ENCODE measurements at regions of chr20 and their contacts with region 1.

Region 1: DNA sequence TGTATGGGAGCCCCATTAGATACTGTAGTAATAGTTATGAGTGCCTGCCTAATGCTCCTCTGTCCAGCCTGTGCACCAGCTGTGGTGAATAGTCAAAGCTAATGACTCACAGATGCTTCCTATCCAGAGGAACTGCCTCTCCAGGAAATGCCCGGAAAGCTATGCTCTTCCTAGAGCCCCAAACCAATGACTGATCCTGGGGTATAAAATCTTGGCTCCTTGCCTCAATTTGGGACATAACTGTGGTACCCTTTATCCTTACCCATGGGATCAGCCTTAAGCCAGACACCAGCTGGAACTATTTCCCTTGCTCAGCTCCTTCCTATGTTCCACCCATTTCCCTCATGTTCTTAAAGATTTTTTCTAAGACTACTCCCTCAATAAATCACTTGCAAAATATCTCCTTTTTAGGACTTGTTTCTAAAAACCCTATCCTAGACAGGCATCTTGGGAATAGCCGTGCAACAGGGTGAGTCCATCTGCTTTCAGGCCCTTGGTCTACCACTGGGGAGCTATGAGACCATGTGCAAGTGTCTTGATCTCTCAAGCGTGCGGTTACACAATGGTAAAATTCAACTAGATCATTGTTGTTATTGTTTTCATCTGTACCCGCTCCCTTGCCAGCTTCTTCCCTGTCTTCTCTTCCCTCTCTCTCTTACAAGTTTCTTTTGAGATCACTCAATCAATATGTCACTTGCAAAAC is 283.7 kb downstream of the BTBD3 start:
- DNase-seq: no peak
- ATAC-seq: no peak
- H3K4me3 Mint-ChIP-seq: no peak overlapping the region
- H3K27ac Mint-ChIP-seq: no peak overlapping the region
- H3K4me1 Mint-ChIP-seq: no peaks in the 10 kb centered on the region
- H3K27me3 Mint-ChIP-seq: no peaks in the 10 kb centered on the region
- CTCF ChIP-seq: no peak

Region 2: DNA sequence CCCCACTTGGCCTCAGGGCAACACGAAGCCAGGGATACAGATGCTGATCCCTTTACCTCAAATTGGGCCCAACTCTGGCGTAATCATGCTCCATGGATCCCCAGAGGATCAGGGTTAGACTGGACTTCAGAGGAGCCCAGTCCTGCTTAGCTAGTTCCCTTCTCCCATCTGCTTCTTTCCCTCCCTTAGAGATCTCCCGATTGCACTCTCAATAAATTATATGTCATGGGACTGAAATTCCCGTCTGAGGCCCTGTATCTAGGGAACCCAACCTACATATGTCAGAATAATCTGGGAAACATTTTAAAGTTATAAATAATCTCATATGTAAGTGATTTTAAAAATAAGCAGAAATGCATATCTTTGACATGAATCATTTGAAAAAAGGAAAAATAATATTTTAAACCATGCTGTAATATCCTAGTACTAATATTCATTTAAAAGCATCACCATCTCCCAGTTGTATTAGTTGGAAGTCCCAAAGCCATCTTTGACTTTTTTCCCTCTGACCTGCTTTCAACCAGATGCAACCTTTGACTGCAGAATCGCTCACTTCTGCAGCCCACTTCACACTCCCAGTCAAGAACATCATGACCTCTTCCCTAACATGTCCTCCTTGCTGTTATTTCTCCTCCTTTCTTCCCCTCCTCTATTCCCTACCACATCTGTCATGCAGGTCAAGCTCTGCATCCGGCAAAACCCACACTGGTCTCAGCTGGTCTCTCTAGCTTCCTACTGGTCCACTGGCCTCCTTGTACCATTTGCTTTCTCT is 109.8 kb after region 1 on chr20:
- CTCF ChIA-PET with region 1: no interaction called
- POLR2A ChIA-PET with region 1: interaction called, 11 read pairs
- DNase-seq: no peak
- ATAC-seq: no peak
- H3K4me3 Mint-ChIP-seq: no peak overlapping the region
- H3K27ac Mint-ChIP-seq: no peak overlapping the region
- H3K4me1 Mint-ChIP-seq: peaks cover 13% of the 10 kb centered on the region
- H3K27me3 Mint-ChIP-seq: no peaks in the 10 kb centered on the region
- CTCF ChIP-seq: no peak

Region 3: GRCh38 chr20:12535316-12535715 is 333.9 kb after region 1 on chr20:
- CTCF ChIA-PET with region 1: no interaction called
- POLR2A ChIA-PET with region 1: no interaction called
- DNase-seq: no peak
- ATAC-seq: peak; percentile 41
- H3K4me3 Mint-ChIP-seq: no peak overlapping the region
- H3K27ac Mint-ChIP-seq: no peak overlapping the region
- H3K4me1 Mint-ChIP-seq: peaks cover 10% of the 10 kb centered on the region
- H3K27me3 Mint-ChIP-seq: no peaks in the 10 kb centered on the region
- CTCF ChIP-seq: no peak